ENCODE measurements at regions of chr10 and their contacts with region 1.

Region 1: GRCh38 chr10:99845837-99846382 is 63.5 kb downstream of the ABCC2 start:
- DNase-seq: peak; percentile 67
- H3K4me3 ChIP-seq: 0 out of 2 replicates have a peak overlapping the region, but pooled peaks have one; percentile 0
- H3K27me3 ChIP-seq: no peaks in the 10 kb centered on the region
- CTCF ChIP-seq: peak; percentile 87

Region 2: DNA sequence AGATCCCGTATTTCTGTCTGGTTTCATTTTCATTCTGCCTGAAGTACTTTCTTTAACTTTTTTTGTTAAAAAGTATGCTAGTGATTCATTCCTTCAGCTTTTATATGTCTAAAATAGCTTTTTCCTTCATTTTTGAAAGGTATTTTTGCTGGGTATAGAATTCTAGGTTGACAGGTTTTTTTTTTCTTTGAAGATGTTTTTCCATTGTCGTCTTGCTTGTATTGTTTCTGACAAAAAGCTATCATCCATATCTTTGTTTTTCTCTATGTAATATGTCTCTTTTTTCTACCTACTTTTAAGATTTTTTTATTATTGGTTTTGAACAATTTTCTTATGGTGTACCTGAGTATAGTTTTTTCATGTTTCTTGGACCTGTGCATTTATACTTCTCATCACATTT is 105.7 kb before region 1 on chr10:
- CTCF ChIA-PET with region 1: interaction called, 12 read pairs
- POLR2A ChIA-PET with region 1: no interaction called
- DNase-seq: no peak
- H3K4me3 ChIP-seq: no peak overlapping the region
- H3K27me3 ChIP-seq: no peaks in the 10 kb centered on the region
- CTCF ChIP-seq: no peak

Region 3: GRCh38 chr10:99834410-99834809 is 11.5 kb before region 1 on chr10:
- CTCF ChIA-PET with region 1: interaction called, 25 read pairs
- POLR2A ChIA-PET with region 1: no interaction called
- DNase-seq: peak; percentile 49
- H3K4me3 ChIP-seq: no peak overlapping the region
- H3K27me3 ChIP-seq: no peaks in the 10 kb centered on the region
- CTCF ChIP-seq: no peak

Region 4: GRCh38 chr10:99966306-99966705 is 120.4 kb after region 1 on chr10:
- CTCF ChIA-PET with region 1: interaction called, 10 read pairs
- POLR2A ChIA-PET with region 1: no interaction called
- DNase-seq: peak; percentile 62
- H3K4me3 ChIP-seq: no peak overlapping the region
- H3K27me3 ChIP-seq: no peaks in the 10 kb centered on the region
- CTCF ChIP-seq: no peak

Region 5: DNA sequence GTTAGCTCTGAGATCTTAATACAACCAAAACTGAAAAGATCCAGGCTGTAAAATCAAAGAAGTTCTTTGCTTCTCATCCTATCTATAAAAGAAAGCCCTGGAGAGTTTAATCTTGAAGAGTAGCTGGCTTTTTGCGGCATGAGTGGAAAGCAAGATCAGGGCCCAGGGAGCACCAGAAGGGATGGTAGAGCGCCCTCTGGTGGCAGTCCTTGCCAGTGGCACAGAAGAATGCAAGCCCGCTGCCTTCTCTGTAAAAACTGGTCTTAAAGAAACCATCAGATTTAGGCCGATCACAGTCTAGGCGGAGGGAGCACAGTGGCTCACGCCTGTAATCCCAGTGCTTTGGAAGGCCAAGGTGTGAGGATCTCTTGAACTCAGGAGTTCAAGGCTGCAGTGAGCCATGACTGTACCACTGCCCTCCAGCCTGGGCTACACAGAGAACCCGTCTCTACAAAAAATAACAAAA is 200.1 kb after region 1 on chr10:
- CTCF ChIA-PET with region 1: interaction called, 199 read pairs
- POLR2A ChIA-PET with region 1: interaction called, 3 read pairs
- DNase-seq: peak; percentile 23
- H3K4me3 ChIP-seq: no peak overlapping the region
- H3K27me3 ChIP-seq: no peaks in the 10 kb centered on the region
- CTCF ChIP-seq: peak; percentile 98

Region 6: GRCh38 chr10:100319707-100320106 is 473.8 kb after region 1 on chr10:
- CTCF ChIA-PET with region 1: no interaction called
- POLR2A ChIA-PET with region 1: no interaction called
- DNase-seq: no peak
- H3K4me3 ChIP-seq: no peak overlapping the region
- H3K27me3 ChIP-seq: peaks cover 6% of the 10 kb centered on the region
- CTCF ChIP-seq: no peak